ENCODE measurements at regions of chr1 and their contacts with region 1.

Region 1: GRCh38 chr1:156319664-156320063 is 18.4 kb downstream of the CCT3 start:
- DNase-seq: peak in 1 of 7 donors; percentile 36
- H3K4me3 ChIP-seq: no peak overlapping the region
- H3K27ac ChIP-seq: no peak overlapping the region
- H3K4me1 ChIP-seq: no peaks in the 10 kb centered on the region
- H3K27me3 ChIP-seq: no peaks in the 10 kb centered on the region
- CTCF ChIP-seq: peak; percentile 26 to 61 (median 44)
- POLR2A ChIP-seq: no peak

Region 2: GRCh38 chr1:155946633-155947219 is 372.9 kb before region 1 on chr1:
- intact Hi-C with region 1: no loop called
- DNase-seq: no peak
- H3K4me3 ChIP-seq: no peak overlapping the region
- H3K27ac ChIP-seq: no peak overlapping the region
- H3K4me1 ChIP-seq: peaks cover 0 to 9% of the 10 kb centered on the region in 2 donors
- H3K27me3 ChIP-seq: no peaks in the 10 kb centered on the region
- CTCF ChIP-seq: no peak
- POLR2A ChIP-seq: no peak

Region 3: GRCh38 chr1:156001682-156002171 is 317.9 kb before region 1 on chr1:
- intact Hi-C with region 1: no loop called
- DNase-seq: no peak
- H3K4me3 ChIP-seq: no peak overlapping the region
- H3K27ac ChIP-seq: peak overlapping the region in 1 of 5 donors; percentile 5
- H3K4me1 ChIP-seq: peaks cover 0 to 14% of the 10 kb centered on the region in 2 donors
- H3K27me3 ChIP-seq: no peaks in the 10 kb centered on the region
- CTCF ChIP-seq: peak in 1 of 6 experiments; percentile 14
- POLR2A ChIP-seq: no peak

Region 4: DNA sequence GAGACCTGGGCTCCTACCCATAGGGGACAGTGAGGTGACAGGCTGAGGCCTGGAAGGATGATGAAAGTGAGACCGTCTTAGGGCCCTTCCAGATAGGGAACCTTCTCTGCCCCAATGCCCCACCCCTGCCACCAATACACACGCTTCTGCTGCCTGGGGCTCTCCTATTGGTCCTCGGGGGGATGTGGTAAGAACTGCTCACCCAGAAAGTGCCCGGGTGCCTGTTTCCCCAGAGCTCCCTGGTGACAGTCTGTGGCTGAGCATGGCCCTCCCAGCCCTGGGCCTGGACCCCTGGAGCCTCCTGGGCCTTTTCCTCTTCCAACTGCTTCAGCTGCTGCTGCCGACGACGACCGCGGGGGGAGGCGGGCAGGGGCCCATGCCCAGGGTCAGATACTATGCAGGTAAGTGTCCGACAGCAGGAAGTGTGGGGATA is 165.3 kb before region 1 on chr1:
- intact Hi-C with region 1: loop called in 1 of 2 experiments (anchors 10 kb)
- DNase-seq: peak in 1 of 7 donors; percentile 33
- H3K4me3 ChIP-seq: no peak overlapping the region
- H3K27ac ChIP-seq: no peak overlapping the region
- H3K4me1 ChIP-seq: no peaks in the 10 kb centered on the region
- H3K27me3 ChIP-seq: no peaks in the 10 kb centered on the region
- CTCF ChIP-seq: no peak
- POLR2A ChIP-seq: no peak

Region 5: DNA sequence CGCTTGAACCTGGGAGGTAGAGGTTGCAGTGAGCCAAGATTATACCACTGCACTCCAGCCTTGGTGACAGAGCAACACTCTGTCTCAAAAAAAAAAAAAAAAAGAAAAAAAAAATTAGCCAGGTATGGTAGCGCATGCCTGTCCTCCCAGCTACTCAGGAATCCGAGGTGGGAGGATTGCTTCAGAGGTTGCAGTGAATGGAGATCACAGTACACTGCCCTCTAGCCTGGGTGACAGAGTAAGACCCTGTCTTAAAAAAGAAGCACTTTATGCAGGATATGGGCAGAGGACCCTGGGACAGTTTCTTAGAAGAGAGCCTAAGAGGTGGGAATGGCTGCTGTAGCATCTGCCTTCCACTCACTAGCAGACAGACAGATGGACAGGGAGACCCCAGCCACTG is 229.7 kb after region 1 on chr1:
- intact Hi-C with region 1: no loop called
- DNase-seq: no peak
- H3K4me3 ChIP-seq: no peak overlapping the region
- H3K27ac ChIP-seq: no peak overlapping the region
- H3K4me1 ChIP-seq: no peaks in the 10 kb centered on the region
- H3K27me3 ChIP-seq: no peaks in the 10 kb centered on the region
- CTCF ChIP-seq: no peak
- POLR2A ChIP-seq: no peak